CD14-positive monocyte (primary cell): ENCODE measurements at regions of chr9 and their contacts with region 1.

Region 1: DNA sequence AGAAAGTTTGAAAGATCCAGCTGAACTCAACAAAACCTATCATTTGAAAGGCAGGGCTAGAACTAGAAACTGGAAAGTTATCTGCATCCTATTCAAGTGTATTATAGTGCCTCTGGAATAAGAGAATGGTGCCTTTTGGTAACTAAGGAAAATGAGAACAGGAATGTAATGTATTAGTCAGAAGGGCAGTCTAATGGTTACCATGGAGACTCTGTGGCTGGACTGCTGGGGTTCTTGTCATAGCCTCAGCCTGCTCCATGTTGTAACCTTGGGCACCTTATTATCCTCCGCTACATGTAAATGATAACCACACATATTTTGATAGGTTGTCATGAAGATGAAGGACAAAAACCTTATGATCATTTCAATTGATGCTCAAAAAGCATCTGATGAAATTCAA is 24.6 kb upstream of the IFNB1 start:
- DNase-seq: no peak
- H3K4me3 ChIP-seq: no peak overlapping the region
- H3K4me3 Mint-ChIP-seq: no peak overlapping the region
- H3K27ac ChIP-seq: no peak overlapping the region
- H3K27ac Mint-ChIP-seq: no peak overlapping the region
- H3K4me1 ChIP-seq: peaks cover 27 to 34% of the 10 kb centered on the region in 2 donors
- H3K4me1 Mint-ChIP-seq: peaks cover 34% of the 10 kb centered on the region
- H3K27me3 ChIP-seq: no peaks in the 10 kb centered on the region
- H3K27me3 Mint-ChIP-seq: no peaks in the 10 kb centered on the region
- CTCF ChIP-seq: no peak

Region 2: GRCh38 chr9:20684035-20684872 is 418.1 kb before region 1 on chr9 and contains the start of gene FOCAD:
- intact Hi-C with region 1: loop called in 1 of 2 experiments (anchors 10 kb)
- DNase-seq: peak; percentile 90 to 93 (median 92)
- H3K4me3 ChIP-seq: peak within 1 kb of the TSS; percentile 95 to 96 (median 95)
- H3K4me3 Mint-ChIP-seq: peak within 1 kb of the TSS; percentile 91 to 93
- H3K27ac ChIP-seq: peak within 1 kb of the TSS; percentile 68 to 89
- H3K27ac Mint-ChIP-seq: peak within 1 kb of the TSS; percentile 60 to 91 (median 89)
- H3K4me1 ChIP-seq: peaks cover 15 to 29% of the 10 kb centered on the region in 2 donors
- H3K4me1 Mint-ChIP-seq: peaks cover 22% of the 10 kb centered on the region
- H3K27me3 ChIP-seq: no peaks in the 10 kb centered on the region
- H3K27me3 Mint-ChIP-seq: no peaks in the 10 kb centered on the region
- CTCF ChIP-seq: no peak
- polyA plus RNA-seq, gene FOCAD: 4.9 to 6.3 (median 5.1) TPM

Region 3: GRCh38 chr9:20884985-20885593 is 217.2 kb before region 1 on chr9:
- intact Hi-C with region 1: loop called in 1 of 2 experiments (anchors 5 kb)
- DNase-seq: peak; percentile 19 to 46 (median 41)
- H3K4me3 ChIP-seq: no peak overlapping the region
- H3K4me3 Mint-ChIP-seq: no peak overlapping the region
- H3K27ac ChIP-seq: no peak overlapping the region
- H3K27ac Mint-ChIP-seq: no peak overlapping the region
- H3K4me1 ChIP-seq: no peaks in the 10 kb centered on the region
- H3K4me1 Mint-ChIP-seq: no peaks in the 10 kb centered on the region
- H3K27me3 ChIP-seq: no peaks in the 10 kb centered on the region
- H3K27me3 Mint-ChIP-seq: no peaks in the 10 kb centered on the region
- CTCF ChIP-seq: peak; percentile 78

Region 4: DNA sequence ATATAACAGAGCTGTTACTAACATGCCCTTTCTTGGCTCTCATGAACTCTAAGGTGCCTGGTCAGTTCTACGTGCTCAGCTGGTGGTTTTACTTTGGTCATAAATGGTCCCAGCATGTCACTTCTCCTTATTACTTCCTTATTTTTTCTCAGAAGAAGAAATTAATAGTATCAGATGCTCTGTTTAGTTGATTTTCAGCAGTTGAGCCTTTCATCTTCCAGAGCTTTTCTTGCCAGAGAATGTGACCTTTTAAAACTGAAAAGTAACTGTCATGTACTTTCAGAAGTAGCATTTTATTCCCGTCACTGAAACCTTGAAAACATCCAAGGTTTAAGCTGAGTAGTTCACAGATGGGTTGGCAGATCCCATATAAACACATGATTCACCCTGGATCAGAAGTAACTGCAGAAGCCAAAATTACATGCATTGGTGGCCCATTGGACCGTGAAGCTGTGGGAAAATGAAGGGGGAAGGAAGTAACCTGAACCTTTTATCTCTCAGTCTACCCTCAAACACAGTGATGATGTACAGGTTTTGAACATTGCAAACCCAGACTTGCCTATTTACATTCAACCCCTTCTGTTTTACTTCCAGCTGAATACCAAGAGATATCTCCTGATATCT is 121.4 kb before region 1 on chr9:
- intact Hi-C with region 1: loop called in 1 of 2 experiments (anchors 5 kb)
- DNase-seq: peak; percentile 70 to 80 (median 73)
- H3K4me3 ChIP-seq: peak overlapping the region in 1 of 3 experiments; percentile 15
- H3K4me3 Mint-ChIP-seq: peak overlapping the region in 1 of 2 donors; percentile 61
- H3K27ac ChIP-seq: peak overlapping the region; percentile 47 to 79
- H3K27ac Mint-ChIP-seq: peak overlapping the region; percentile 62 to 91 (median 85)
- H3K4me1 ChIP-seq: peaks cover 32 to 35% of the 10 kb centered on the region in 2 donors
- H3K4me1 Mint-ChIP-seq: peaks cover 26% of the 10 kb centered on the region
- H3K27me3 ChIP-seq: no peaks in the 10 kb centered on the region
- H3K27me3 Mint-ChIP-seq: peaks cover 0 to 1% (median 0%) of the 10 kb centered on the region in 3 donors
- CTCF ChIP-seq: no peak